ENCODE measurements at regions of chr3 and their contacts with region 1.

Region 1: GRCh38 chr3:98817547-98818041 is 54.5 kb downstream of the ST3GAL6 start:
- DNase-seq: no peak
- H3K4me3 Mint-ChIP-seq: no peak overlapping the region
- H3K27ac Mint-ChIP-seq: no peak overlapping the region
- H3K4me1 Mint-ChIP-seq: no peaks in the 10 kb centered on the region
- H3K27me3 Mint-ChIP-seq: no peaks in the 10 kb centered on the region

Region 2: GRCh38 chr3:98022978-98023820 is 794.4 kb before region 1 on chr3:
- CTCF ChIA-PET with region 1: no interaction called
- DNase-seq: peak; percentile 94
- H3K4me3 Mint-ChIP-seq: no peak overlapping the region
- H3K27ac Mint-ChIP-seq: peak overlapping the region; percentile 9
- H3K4me1 Mint-ChIP-seq: peaks cover 18% of the 10 kb centered on the region
- H3K27me3 Mint-ChIP-seq: peaks cover 5% of the 10 kb centered on the region

Region 3: GRCh38 chr3:98593046-98593936 is 224.3 kb before region 1 on chr3 and contains the start of gene CPOX:
- CTCF ChIA-PET with region 1: interaction called, 31 read pairs
- DNase-seq: peak; percentile 95
- H3K4me3 Mint-ChIP-seq: peak within 1 kb of the TSS; percentile 95
- H3K27ac Mint-ChIP-seq: peak within 1 kb of the TSS; percentile 92
- H3K4me1 Mint-ChIP-seq: peaks cover 58% of the 10 kb centered on the region
- H3K27me3 Mint-ChIP-seq: peaks cover 6% of the 10 kb centered on the region

Region 4: DNA sequence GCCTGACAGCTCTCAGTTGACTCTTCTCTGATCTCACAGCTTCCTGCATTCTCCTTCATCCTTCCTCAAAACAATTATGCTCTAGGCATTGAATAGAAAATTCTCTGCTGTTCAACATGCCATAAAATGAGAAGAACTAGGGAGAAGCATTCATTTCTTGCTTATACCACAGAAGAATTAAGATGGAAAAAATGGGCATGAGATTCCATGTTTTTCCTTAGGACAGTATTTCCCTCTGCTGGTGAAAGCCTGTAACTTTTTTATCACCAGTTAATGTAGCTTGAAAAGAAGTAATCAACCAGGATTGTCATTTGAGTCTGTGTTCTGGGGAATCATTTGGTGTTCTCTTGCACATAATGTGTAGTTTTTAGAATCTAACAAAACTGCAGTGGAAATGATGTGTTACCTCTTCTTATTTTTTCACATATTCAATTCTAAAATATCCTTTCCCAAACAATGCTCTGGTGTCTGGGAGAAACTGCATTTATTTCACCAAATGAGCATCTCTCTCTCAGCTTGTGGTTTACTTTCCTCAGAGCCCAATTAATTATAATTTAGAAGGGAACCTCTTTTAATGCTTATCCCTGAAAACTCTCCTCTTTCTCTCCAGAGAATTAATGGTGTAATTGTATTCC is 176.7 kb after region 1 on chr3:
- CTCF ChIA-PET with region 1: interaction called, 22 read pairs
- DNase-seq: no peak
- H3K4me3 Mint-ChIP-seq: no peak overlapping the region
- H3K27ac Mint-ChIP-seq: no peak overlapping the region
- H3K4me1 Mint-ChIP-seq: no peaks in the 10 kb centered on the region
- H3K27me3 Mint-ChIP-seq: no peaks in the 10 kb centered on the region

Region 5: GRCh38 chr3:99172736-99173657 is 355.4 kb after region 1 on chr3:
- CTCF ChIA-PET with region 1: interaction called, 20 read pairs
- DNase-seq: peak; percentile 58
- H3K4me3 Mint-ChIP-seq: no peak overlapping the region
- H3K27ac Mint-ChIP-seq: no peak overlapping the region
- H3K4me1 Mint-ChIP-seq: no peaks in the 10 kb centered on the region
- H3K27me3 Mint-ChIP-seq: no peaks in the 10 kb centered on the region

Measured in activated naive CD4-positive, alpha-beta T cell treated with anti-CD3 and anti-CD28 coated beads, Interleukin-2, amount 10 ng/mL, durations not matched to agents 7 days and 5 days (primary cell).